Left ventricle myocardium superior (tissue), 1 donor: ENCODE measurements at regions of chr6 and their contacts with region 1.

Region 1: GRCh38 chr6:89970609-89971337 is 76.5 kb downstream of the GJA10 start:
- DNase-seq: peak; percentile 44
- ATAC-seq: peak; percentile 85

Region 2: GRCh38 chr6:90304308-90304707 is 333.5 kb after region 1 on chr6:
- intact Hi-C with region 1: loop called (anchors 10 kb)
- DNase-seq: no peak
- ATAC-seq: no peak

Region 3: GRCh38 chr6:90393232-90393884 is 422.6 kb after region 1 on chr6:
- intact Hi-C with region 1: loop called (anchors 2 kb)
- DNase-seq: no peak
- ATAC-seq: peak; percentile 72